Posterior vena cava (tissue), 2 donors: ENCODE measurements at regions of chr22 and their contacts with region 1.

Region 1: GRCh38 chr22:22168190-22168940 is 76.2 kb upstream of the VPREB1 start:
- DNase-seq: no peak

Region 2: DNA sequence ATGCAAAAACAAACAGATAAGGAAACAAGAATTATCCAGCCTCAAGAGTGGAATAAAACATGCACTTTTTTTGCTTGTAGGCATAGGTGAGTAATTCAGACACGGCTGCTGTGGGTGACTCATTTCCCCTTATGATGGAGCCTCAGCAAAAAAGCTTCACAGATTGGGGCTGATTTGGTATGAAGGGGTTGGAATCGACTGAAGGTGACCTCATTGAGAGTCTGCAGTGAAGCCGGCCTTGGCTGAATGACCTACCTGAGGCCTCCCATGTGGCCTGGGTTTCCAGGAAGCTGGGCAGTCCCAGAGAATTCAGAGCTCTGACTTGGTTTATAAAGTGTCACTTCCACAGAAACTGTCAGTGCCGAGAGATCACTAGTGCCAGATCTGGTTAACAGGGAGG is 42.0 kb after region 1 on chr22:
- intact Hi-C with region 1: no loop called
- DNase-seq: no peak

Region 3: GRCh38 chr22:22673628-22674027 is 505.3 kb after region 1 on chr22:
- intact Hi-C with region 1: loop called in 1 of 2 experiments (anchors 5 kb)
- DNase-seq: no peak